ENCODE measurements at regions of chr4 and their contacts with region 1.

Region 1: GRCh38 chr4:186191200-186192065 is at the start of gene CYP4V2:
- DNase-seq: peak; percentile 68 to 94 (median 90)
- ATAC-seq: peak; percentile 90
- H3K4me3 ChIP-seq: peak within 1 kb of the TSS; percentile 91
- H3K4me3 Mint-ChIP-seq: peak within 1 kb of the TSS; percentile 89 to 97 (median 94)
- H3K27ac ChIP-seq: peak within 1 kb of the TSS; percentile 95
- H3K27ac Mint-ChIP-seq: peak within 1 kb of the TSS; percentile 94 to 99 (median 98)
- H3K4me1 ChIP-seq: peaks cover 12 to 19% of the 10 kb centered on the region in 2 donors
- H3K4me1 Mint-ChIP-seq: peaks cover 34 to 62% (median 56%) of the 10 kb centered on the region in 7 donors
- H3K27me3 ChIP-seq: no peaks in the 10 kb centered on the region
- H3K27me3 Mint-ChIP-seq: no peaks in the 10 kb centered on the region
- total RNA-seq, gene CYP4V2: 19.7 to 41.4 (median 26.0) TPM

Region 2: GRCh38 chr4:186095406-186095805 is 96.0 kb before region 1 on chr4:
- CTCF ChIA-PET with region 1: no interaction called
- POLR2A ChIA-PET with region 1: no interaction called
- intact Hi-C with region 1: no loop called
- DNase-seq: no peak
- ATAC-seq: no peak
- H3K4me3 ChIP-seq: no peak overlapping the region
- H3K4me3 Mint-ChIP-seq: no peak overlapping the region
- H3K27ac ChIP-seq: no peak overlapping the region
- H3K27ac Mint-ChIP-seq: no peak overlapping the region
- H3K4me1 ChIP-seq: no peaks in the 10 kb centered on the region
- H3K4me1 Mint-ChIP-seq: no peaks in the 10 kb centered on the region
- H3K27me3 ChIP-seq: no peaks in the 10 kb centered on the region
- H3K27me3 Mint-ChIP-seq: peaks cover 5 to 27% (median 14%) of the 10 kb centered on the region in 5 donors

Region 3: GRCh38 chr4:186132577-186133242 is 58.7 kb before region 1 on chr4:
- CTCF ChIA-PET with region 1: no interaction called
- POLR2A ChIA-PET with region 1: no interaction called
- intact Hi-C with region 1: no loop called
- DNase-seq: no peak
- ATAC-seq: peak; percentile 44
- H3K4me3 ChIP-seq: no peak overlapping the region
- H3K4me3 Mint-ChIP-seq: no peak overlapping the region
- H3K27ac ChIP-seq: no peak overlapping the region
- H3K27ac Mint-ChIP-seq: no peak overlapping the region
- H3K4me1 ChIP-seq: no peaks in the 10 kb centered on the region
- H3K4me1 Mint-ChIP-seq: peaks cover 0 to 18% (median 0%) of the 10 kb centered on the region in 7 donors
- H3K27me3 ChIP-seq: no peaks in the 10 kb centered on the region
- H3K27me3 Mint-ChIP-seq: peaks cover 4 to 16% (median 9%) of the 10 kb centered on the region in 5 donors

Region 4: DNA sequence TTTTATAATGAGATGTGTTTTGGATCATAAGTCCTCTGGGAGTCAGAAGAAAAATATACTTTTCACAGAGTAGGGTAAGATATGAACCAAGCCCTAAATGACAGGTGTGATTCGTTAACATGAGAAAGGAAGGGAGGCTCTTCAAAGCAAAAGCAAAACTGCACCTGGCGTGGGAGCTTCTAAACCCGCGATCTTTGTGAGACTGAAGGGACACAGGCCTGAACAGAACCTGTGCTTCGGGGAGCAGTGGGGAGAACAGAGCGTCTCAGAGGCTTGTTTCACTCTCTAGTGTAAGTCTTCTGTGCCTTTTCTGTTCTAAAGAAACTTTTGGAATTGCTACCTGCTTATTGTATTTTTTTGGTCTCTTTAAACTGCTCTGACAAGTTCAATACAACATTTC is 30.3 kb before region 1 on chr4:
- CTCF ChIA-PET with region 1: interaction called, 3 read pairs
- POLR2A ChIA-PET with region 1: interaction called, 12 read pairs
- intact Hi-C with region 1: loop called (anchors 1 to 2 kb)
- DNase-seq: peak in 6 of 9 donors; percentile 16 to 31 (median 20)
- ATAC-seq: peak; percentile 79
- H3K4me3 ChIP-seq: no peak overlapping the region
- H3K4me3 Mint-ChIP-seq: peak overlapping the region; percentile 5 to 81 (median 70)
- H3K27ac ChIP-seq: no peak overlapping the region
- H3K27ac Mint-ChIP-seq: peak overlapping the region in 6 of 9 donors; percentile 29 to 90 (median 71)
- H3K4me1 ChIP-seq: no peaks in the 10 kb centered on the region
- H3K4me1 Mint-ChIP-seq: peaks cover 0 to 8% (median 5%) of the 10 kb centered on the region in 7 donors
- H3K27me3 ChIP-seq: no peaks in the 10 kb centered on the region
- H3K27me3 Mint-ChIP-seq: peaks cover 0 to 6% (median 0%) of the 10 kb centered on the region in 5 donors